ENCODE measurements at regions of chr13 and their contacts with region 1.

Region 1: GRCh38 chr13:31424117-31424729 is 224.4 kb downstream of the B3GLCT start:
- DNase-seq: peak; percentile 69 to 73
- H3K4me3 ChIP-seq: no peak overlapping the region
- H3K27ac ChIP-seq: no peak overlapping the region
- H3K4me1 ChIP-seq: no peaks in the 10 kb centered on the region
- H3K27me3 ChIP-seq: no peaks in the 10 kb centered on the region
- CTCF ChIP-seq: peak; percentile 64 to 82 (median 77)
- POLR2A ChIP-seq: no peak

Region 2: DNA sequence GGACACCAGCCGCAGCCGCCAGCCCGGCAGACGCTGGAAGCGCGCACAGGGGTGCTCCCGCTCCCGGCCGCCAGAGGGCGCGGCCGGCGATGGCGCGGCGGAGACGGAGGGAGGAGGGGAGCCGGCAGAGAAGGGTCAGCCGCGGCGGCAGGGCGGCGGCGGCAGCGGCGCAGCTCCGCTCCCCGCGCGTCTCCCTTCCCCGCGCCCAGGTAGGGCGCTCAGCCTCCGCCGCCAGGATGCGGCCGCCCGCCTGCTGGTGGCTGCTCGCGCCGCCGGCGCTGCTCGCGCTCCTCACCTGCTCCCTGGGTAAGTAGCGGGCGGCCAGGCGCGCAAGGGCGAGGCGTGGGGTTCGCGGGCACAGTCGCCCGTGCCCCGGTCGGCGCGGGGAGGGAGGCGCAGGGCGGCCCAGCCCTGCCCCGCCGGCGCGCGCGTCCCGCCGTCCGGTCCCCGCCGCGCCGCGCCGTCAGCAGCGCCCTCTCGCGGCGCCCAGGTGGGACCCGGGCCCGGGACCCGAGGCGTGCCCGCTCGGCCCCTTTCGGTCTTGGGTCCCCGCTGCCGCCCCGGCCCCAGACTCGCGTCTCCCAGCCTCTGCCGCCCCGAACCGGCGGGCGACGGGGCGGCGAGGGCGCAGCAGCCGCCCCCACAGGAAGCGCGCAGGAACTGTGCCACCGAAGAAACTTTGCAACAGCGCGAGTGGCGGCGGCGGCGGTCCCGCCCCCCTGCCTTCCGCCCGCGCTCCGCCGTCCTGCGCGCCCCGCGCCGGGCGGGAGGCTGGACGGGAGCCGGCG is 224.2 kb before region 1 on chr13 and contains the start of gene B3GLCT:
- intact Hi-C with region 1: loop called (anchors 10 kb)
- DNase-seq: peak; percentile 48 to 77
- H3K4me3 ChIP-seq: peak within 1 kb of the TSS; percentile 65 to 89 (median 79)
- H3K27ac ChIP-seq: peak within 1 kb of the TSS; percentile 96 to 99
- H3K4me1 ChIP-seq: peaks cover 0 to 7% of the 10 kb centered on the region in 2 donors
- H3K27me3 ChIP-seq: no peaks in the 10 kb centered on the region
- CTCF ChIP-seq: peak in 2 of 3 donors; percentile 70 to 87
- POLR2A ChIP-seq: no peak
- total RNA-seq, gene B3GLCT: 7.5 to 19.2 (median 10.5) TPM

Region 3: GRCh38 chr13:31452525-31452924 is 28.3 kb after region 1 on chr13:
- intact Hi-C with region 1: no loop called
- DNase-seq: no peak
- H3K4me3 ChIP-seq: no peak overlapping the region
- H3K27ac ChIP-seq: no peak overlapping the region
- H3K4me1 ChIP-seq: no peaks in the 10 kb centered on the region
- H3K27me3 ChIP-seq: no peaks in the 10 kb centered on the region
- CTCF ChIP-seq: no peak
- POLR2A ChIP-seq: no peak

Region 4: GRCh38 chr13:31909864-31910551 is 485.8 kb after region 1 on chr13:
- intact Hi-C with region 1: no loop called
- DNase-seq: no peak
- H3K4me3 ChIP-seq: no peak overlapping the region
- H3K27ac ChIP-seq: no peak overlapping the region
- H3K4me1 ChIP-seq: no peaks in the 10 kb centered on the region
- H3K27me3 ChIP-seq: no peaks in the 10 kb centered on the region
- CTCF ChIP-seq: peak; percentile 58 to 86 (median 75)
- POLR2A ChIP-seq: no peak

Measured in breast epithelium (tissue), 4 donors.